Breast epithelium (tissue), 4 donors: ENCODE measurements at regions of chr17 and their contacts with region 1.

Region 1: DNA sequence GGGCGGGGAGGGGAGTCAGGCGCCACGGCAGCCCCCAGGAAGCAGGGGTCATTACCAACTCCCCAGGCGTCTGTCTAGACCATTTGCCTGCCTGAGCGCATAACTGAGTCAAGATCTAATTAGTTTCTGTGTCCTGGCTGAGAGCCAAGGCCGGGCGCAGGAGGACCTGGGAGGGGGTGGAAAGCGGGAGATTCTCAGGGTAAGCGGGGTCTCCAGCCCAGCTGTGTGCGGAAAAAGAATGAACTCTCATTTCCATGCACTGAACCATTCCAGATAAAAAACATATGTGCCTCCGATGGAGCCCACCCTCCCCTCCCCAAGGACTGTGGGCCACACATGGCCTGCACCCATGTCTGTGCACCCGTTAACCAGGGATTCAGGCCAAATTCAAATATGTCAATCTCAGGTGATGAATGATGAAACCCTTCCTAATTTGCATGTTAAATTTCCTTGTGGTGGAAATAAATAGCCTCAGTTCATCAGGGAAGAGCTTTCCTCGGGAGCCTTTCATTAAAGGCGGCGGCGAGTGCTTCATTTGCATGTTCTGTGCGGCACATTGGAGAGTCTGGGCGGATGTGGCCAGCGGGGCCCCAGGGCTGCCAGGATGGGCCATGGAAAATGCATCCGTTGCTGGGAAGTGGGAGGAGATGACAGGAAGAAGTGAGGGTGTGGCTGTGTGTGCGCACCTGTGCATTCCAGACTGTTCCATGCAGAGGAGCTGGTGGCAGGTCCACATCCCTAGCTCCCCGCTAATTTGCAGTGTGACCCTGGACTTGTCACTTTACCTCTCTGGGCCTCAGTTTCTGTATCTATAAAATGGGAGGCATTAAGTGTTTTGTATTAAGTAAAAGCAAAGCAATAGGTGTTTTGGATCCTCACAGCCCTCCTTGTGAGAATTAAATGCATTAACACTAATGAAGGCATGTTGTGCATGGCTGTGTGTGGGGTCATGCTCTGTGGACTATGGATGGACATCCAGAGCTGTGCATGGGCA is 151.1 kb downstream of the SDK2 start:
- DNase-seq: peak in 1 of 2 donors; percentile 26
- H3K4me3 ChIP-seq: no peak overlapping the region
- H3K27ac ChIP-seq: no peak overlapping the region
- H3K4me1 ChIP-seq: no peaks in the 10 kb centered on the region
- H3K27me3 ChIP-seq: peaks cover 0 to 28% of the 10 kb centered on the region in 2 donors
- CTCF ChIP-seq: no peak
- POLR2A ChIP-seq: no peak

Region 2: DNA sequence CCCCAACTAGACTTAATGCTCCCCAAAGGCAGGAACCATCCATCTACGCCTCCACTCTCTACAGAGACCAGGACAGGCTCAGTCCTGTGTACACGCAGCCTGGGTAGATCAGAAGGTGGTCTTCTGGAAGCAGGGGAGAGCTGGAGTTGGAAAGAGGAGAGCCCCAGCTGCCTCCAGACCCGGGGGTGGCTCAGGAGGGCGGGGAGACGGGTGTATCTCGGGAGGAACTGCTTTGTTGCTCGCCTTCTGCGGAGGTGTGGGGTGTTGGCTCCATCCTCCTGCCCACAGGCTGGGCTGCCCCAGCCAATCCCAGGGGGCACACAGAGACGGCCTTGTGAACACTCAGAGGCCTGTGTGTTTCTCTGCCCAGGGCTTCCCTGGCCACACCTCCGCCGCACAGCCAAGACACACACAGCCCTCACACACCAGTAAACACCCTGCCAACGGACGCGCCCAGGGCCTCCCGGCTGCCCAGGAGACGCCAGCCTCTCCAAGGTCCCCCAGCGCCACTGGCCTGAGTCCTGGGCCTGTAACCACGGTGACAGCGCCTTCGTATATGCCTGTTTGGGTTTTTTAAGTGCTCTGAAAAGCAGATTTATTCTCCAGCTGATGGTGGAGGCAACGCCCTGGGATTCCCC is 37.9 kb before region 1 on chr17:
- intact Hi-C with region 1: no loop called
- DNase-seq: peak; percentile 25 to 73
- H3K4me3 ChIP-seq: no peak overlapping the region
- H3K27ac ChIP-seq: no peak overlapping the region
- H3K4me1 ChIP-seq: no peaks in the 10 kb centered on the region
- H3K27me3 ChIP-seq: no peaks in the 10 kb centered on the region
- CTCF ChIP-seq: no peak
- POLR2A ChIP-seq: no peak

Region 3: GRCh38 chr17:73546770-73547536 is 53.8 kb after region 1 on chr17:
- intact Hi-C with region 1: loop called (anchors 2 kb)
- DNase-seq: peak in 1 of 2 donors; percentile 41
- H3K4me3 ChIP-seq: no peak overlapping the region
- H3K27ac ChIP-seq: no peak overlapping the region
- H3K4me1 ChIP-seq: no peaks in the 10 kb centered on the region
- H3K27me3 ChIP-seq: peaks cover 0 to 10% of the 10 kb centered on the region in 2 donors
- CTCF ChIP-seq: no peak
- POLR2A ChIP-seq: no peak